KBM-7 (cell line): ENCODE measurements at regions of chr11 and their contacts with region 1.

Region 1: GRCh38 chr11:122601141-122602125 is 54.1 kb upstream of the UBASH3B start:
- DNase-seq: no peak

Region 2: GRCh38 chr11:122309262-122309925 is 292.0 kb before region 1 on chr11:
- in situ Hi-C with region 1: no loop called
- DNase-seq: no peak

Region 3: DNA sequence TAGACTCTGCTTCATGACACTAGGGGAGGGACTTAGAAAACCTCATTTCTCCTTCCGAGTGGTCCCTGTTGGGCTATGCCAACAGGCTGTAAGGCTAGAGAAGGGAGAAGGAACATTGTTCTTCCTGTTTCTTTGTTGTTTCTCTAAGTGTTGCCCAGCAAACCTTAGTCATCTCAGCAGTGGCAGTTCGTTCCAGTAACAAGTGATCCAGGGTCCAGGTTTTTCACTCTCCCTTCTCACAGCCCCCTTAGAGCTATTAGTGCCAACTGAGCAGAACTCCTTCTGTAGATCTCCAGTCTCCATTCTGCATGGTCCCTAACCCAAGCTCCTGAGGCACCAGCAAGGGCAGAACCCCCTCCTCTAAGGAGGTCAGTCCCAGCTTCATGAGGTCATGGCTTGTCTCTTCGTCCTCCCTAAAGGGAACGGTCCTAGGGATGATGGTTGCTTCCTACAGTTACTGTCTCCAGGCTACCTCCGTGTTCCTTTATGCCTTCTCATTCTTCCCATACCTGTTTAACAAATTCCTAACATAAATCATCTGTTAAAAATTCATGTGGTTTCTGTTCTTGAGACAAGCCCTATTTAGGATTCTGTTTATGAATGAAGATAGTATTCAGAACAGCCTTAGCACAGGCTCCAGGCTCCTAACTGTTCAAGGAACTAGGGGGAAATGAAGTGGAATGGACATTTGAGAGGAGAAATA is 114.5 kb before region 1 on chr11:
- in situ Hi-C with region 1: no loop called
- DNase-seq: peak; percentile 14

Region 4: DNA sequence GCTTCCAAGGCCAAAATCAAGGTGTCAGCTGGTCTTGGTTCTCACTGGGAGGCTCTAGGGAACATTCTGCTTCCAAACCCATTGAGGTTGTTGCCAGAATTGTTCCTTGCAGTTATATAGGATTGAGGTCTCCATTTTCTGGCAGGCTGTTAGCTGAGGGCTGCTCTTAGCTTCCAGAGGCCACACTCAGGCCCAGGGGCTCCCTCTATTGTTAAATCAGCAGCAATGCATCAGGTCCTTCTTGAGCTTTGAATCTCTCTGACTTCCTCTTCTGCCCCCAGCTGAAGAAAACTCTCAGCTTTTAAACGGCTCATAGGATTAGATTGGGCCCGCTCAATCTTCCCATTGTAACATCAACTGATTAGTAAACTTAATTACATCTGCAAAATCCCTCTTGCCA is 419.5 kb after region 1 on chr11:
- in situ Hi-C with region 1: loop called (anchors 25 kb)
- DNase-seq: peak; percentile 84